Endothelial cell of umbilical vein (primary cell): ENCODE measurements at regions of chr14 and their contacts with region 1.

Region 1: DNA sequence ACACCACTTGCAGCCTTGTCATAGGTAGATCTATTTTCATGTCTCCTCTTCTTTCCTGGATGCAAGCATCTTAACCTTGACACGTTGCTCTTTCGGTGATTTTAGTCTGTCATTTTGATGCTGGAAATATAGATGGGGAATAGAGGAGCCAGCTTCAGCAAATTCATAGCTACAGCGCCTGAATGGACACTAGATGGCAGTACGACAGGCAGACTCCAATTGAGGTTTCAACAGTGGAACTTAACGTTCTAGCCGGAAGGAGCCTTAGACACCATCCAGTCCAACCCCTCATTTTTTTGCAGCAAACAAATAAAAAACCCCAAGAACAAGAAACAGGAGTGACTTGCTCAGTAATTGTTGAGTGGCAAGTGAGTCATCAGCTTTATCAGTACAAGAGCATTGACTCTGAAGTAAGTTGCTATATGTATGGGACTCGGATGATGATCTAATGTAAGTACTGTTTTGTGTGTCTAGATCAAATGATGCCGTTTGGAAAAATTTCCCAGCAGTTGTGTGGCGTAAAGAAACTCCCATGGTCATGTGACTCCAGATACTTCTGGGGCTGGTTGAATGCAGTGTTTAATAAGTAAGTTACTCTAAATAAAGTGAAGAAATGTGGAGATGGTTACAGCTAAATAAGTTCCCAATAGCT is 9.0 kb downstream of the DMAC2L start:
- DNase-seq: peak; percentile 96
- H3K4me3 ChIP-seq: peak overlapping the region in 2 of 3 experiments; percentile 11 to 53
- H3K27ac ChIP-seq: peak overlapping the region; percentile 88
- H3K4me1 ChIP-seq: peaks cover 8% of the 10 kb centered on the region
- H3K27me3 ChIP-seq: no peaks in the 10 kb centered on the region
- CTCF ChIP-seq: peak; percentile 86 to 87
- POLR2A ChIP-seq: no peak

Region 2: GRCh38 chr14:50335389-50335788 is 14.3 kb after region 1 on chr14:
- CTCF ChIA-PET with region 1: interaction called, 17 read pairs
- POLR2A ChIA-PET with region 1: no interaction called
- dilution Hi-C with region 1: no loop called
- intact Hi-C with region 1: loop called (anchors 2 kb)
- DNase-seq: peak; percentile 78
- H3K4me3 ChIP-seq: no peak overlapping the region
- H3K27ac ChIP-seq: peak overlapping the region; percentile 61
- H3K4me1 ChIP-seq: peaks cover 24% of the 10 kb centered on the region
- H3K27me3 ChIP-seq: no peaks in the 10 kb centered on the region
- CTCF ChIP-seq: no peak
- POLR2A ChIP-seq: no peak

Region 3: DNA sequence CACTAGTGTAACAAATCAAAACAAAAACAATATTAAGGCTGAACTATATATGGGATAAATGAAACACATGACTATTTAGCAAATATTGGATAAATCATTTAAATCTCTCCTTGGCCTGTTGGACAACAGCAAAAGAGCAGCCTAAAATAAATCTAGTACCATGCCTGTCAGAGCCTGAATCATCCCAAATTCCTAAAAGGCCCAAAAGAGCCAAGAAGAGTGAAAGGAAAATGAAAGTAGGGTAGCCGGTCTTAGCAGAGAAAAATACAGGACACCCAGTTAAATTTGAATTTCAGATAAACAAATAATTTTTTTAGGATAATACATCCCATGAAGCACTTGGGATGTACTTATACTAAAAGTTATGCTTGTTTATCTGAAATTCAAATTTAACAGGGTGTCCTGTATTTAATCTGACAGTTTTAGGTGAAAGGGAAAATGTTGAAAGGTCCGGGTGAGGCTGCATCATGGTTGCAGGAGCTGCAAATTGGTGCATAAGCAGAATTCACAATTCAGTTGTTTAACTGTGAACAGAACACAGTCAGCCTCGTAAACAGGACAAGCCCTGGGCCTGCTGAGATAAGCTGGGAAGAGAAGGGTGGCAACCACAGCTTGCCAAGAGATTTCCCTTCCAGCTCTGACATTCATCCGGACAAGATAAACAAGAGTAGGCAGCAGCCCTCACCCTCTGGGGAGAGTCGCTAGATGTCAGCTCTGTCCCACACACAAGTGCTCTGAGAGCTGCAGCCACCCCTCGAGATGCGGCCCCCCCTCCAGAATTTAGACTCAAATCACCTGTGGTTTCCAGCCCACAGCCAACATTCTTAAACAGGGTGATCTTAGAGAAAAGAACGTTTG is 21.3 kb after region 1 on chr14:
- CTCF ChIA-PET with region 1: interaction called, 12 read pairs
- POLR2A ChIA-PET with region 1: no interaction called
- dilution Hi-C with region 1: no loop called
- intact Hi-C with region 1: loop called (anchors 2 kb)
- DNase-seq: peak; percentile 84
- H3K4me3 ChIP-seq: no peak overlapping the region
- H3K27ac ChIP-seq: no peak overlapping the region
- H3K4me1 ChIP-seq: peaks cover 18% of the 10 kb centered on the region
- H3K27me3 ChIP-seq: no peaks in the 10 kb centered on the region
- CTCF ChIP-seq: peak in 1 of 2 donors; percentile 33
- POLR2A ChIP-seq: no peak

Region 4: DNA sequence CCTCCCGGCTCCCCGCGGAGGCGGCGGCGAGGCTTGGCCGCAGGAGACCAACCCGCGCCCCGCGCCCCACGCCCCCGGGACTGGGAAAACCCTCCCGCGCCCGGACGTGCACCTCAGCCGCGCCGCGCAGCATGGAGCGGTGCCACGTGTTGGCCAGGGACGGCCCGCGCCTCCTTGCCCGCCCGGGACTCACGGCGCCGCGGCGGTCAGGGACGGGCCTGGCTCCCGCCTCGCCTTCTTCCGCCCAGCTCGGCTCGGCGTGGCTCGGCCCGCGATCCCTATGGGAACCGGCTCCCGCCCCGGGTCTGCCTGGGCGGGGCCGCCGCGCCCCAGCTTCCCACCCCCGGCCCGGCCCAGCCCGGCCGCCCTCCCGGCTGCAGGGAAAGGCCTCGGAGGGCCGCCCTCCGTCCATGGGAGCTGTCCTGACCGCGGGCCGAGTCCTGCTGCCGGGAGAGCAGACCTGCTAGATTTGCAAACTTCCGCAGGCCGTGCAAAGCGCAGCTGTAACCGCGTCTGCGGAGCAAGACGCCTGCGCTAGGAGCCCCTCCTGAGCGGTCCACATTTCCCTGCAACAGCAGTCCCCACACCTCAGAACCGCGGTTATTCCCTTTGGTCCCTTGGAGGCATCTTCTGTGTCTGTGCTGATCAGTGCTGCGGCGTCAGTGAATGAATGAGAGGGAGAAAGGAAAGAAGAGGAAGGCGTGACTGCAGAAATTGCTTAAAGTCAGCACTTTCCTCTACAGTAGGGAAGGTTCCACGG is 75.7 kb after region 1 on chr14 and contains the start of gene CDKL1:
- CTCF ChIA-PET with region 1: interaction called, 33 read pairs
- POLR2A ChIA-PET with region 1: no interaction called
- dilution Hi-C with region 1: no loop called
- intact Hi-C with region 1: loop called (anchors 1 kb)
- DNase-seq: peak; percentile 75
- H3K4me3 ChIP-seq: peak within 1 kb of the TSS; percentile 72 to 97 (median 88)
- H3K27ac ChIP-seq: peak within 1 kb of the TSS; percentile 48
- H3K4me1 ChIP-seq: peaks cover 15% of the 10 kb centered on the region
- H3K27me3 ChIP-seq: no peaks in the 10 kb centered on the region
- CTCF ChIP-seq: no peak
- POLR2A ChIP-seq: peak; percentile 60
- total RNA-seq, gene CDKL1: 9.7 and 14.2 TPM in 2 replicates

Region 5: DNA sequence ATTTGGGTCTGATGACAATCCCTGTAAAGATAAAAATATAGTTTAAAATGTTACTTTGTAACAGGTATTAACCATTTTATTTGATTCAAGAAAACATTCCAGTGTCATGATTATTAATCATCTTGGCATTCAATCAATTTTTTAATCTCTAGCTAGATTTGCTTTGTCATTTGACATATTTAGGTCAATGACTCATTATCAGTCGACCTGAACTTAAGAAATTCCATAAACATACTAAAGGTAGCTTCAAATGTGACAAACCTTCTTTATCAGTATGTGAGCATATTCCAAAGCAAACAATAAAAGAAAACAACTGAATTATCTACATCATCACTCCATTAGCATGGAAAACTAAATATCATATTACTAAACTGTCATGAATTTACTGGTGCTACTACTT is 126.3 kb after region 1 on chr14:
- CTCF ChIA-PET with region 1: interaction called, 9 read pairs
- POLR2A ChIA-PET with region 1: no interaction called
- dilution Hi-C with region 1: no loop called
- intact Hi-C with region 1: loop called (anchors 1 kb)
- DNase-seq: peak; percentile 81
- H3K4me3 ChIP-seq: no peak overlapping the region
- H3K27ac ChIP-seq: peak overlapping the region; percentile 78
- H3K4me1 ChIP-seq: peaks cover 16% of the 10 kb centered on the region
- H3K27me3 ChIP-seq: no peaks in the 10 kb centered on the region
- CTCF ChIP-seq: no peak
- POLR2A ChIP-seq: no peak

Region 6: GRCh38 chr14:50520947-50521815 is 200.0 kb after region 1 on chr14:
- CTCF ChIA-PET with region 1: interaction called, 10 read pairs
- POLR2A ChIA-PET with region 1: no interaction called
- dilution Hi-C with region 1: no loop called
- intact Hi-C with region 1: no loop called
- DNase-seq: peak; percentile 92
- H3K4me3 ChIP-seq: no peak overlapping the region
- H3K27ac ChIP-seq: peak overlapping the region; percentile 87
- H3K4me1 ChIP-seq: peaks cover 33% of the 10 kb centered on the region
- H3K27me3 ChIP-seq: no peaks in the 10 kb centered on the region
- CTCF ChIP-seq: no peak
- POLR2A ChIP-seq: no peak